ENCODE measurements at regions of chr17 and their contacts with region 1.

Region 1: DNA sequence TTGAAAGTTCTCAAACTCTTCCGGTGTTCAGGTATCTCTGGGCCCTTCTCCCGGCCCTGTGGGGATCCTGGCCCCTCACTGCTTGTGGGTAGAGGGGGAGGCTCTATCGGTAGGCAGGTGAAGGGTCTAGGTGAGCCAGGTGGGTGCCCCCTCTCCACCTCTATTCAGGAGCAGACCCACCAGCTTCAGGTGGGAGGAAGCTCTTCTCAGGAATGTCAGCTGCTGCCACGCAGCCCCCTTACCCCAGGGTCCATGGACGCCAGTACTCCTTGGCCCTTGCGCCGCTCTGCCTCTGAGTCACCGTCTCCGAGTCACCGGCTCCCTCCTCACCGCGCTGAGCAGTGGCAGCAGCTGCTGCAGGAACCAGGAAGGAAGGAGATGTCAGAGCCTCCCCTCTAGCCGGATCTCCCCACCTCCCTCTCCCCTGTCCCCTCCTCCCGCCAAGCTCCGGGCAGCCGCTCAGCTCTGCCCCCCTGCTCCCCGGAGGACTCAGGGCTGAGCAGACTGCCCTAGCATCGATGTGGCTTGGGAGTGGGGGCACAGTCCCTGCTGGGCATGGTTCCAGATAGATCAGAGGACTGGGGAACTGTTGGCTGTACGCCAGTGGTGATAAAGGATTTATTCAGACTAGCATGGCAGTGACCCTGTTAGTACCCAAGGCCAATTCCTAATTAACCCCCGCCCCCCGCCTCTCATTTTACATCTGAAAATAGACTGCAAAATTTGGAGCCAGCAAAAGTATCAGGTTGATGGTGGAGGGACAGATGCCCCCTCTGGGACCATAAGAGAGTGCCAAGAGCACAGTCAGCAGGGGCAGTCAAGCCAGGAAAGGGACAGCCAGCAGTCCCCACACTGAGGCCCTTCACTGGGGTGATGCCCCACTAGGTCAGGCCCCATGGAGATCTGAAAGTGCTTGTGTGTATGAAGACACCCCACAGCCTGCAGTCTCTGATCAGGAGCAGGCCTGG is at the start of gene OSBPL7:
- DNase-seq: peak; percentile 91
- ATAC-seq: peak; percentile 97
- H3K4me3 Mint-ChIP-seq: peak within 1 kb of the TSS; percentile 96
- H3K27ac Mint-ChIP-seq: peak within 1 kb of the TSS; percentile 83
- H3K4me1 Mint-ChIP-seq: peaks cover 27% of the 10 kb centered on the region
- H3K27me3 Mint-ChIP-seq: no peaks in the 10 kb centered on the region
- total RNA-seq, gene OSBPL7: 30.3 to 47.8 TPM

Region 2: GRCh38 chr17:47889734-47890529 is 68.2 kb after region 1 on chr17:
- CTCF ChIA-PET with region 1: interaction called, 10 read pairs
- DNase-seq: peak; percentile 93
- ATAC-seq: peak; percentile 99
- H3K4me3 Mint-ChIP-seq: no peak overlapping the region
- H3K27ac Mint-ChIP-seq: no peak overlapping the region
- H3K4me1 Mint-ChIP-seq: peaks cover 22% of the 10 kb centered on the region
- H3K27me3 Mint-ChIP-seq: no peaks in the 10 kb centered on the region

Region 3: DNA sequence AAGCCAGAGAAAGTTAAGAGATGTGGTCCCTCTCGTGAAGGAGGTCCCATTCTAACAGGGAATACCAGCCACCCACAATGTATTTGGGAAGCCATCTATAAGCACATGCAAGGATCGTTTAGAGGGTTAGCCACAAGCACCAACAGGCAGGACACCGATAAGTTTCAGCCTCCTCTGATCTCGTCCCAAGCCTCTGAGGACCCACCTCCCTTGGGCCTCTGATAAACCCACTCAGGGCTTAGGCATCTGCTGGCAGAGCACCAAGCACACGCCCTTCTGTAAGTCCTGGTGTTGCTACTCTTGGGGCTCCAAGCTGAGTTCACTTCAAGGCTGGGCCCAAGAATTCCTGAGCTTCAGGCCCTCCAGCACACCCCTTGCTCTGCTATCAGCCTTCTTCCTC is 114.3 kb after region 1 on chr17:
- CTCF ChIA-PET with region 1: no interaction called
- DNase-seq: no peak
- ATAC-seq: no peak
- H3K4me3 Mint-ChIP-seq: no peak overlapping the region
- H3K27ac Mint-ChIP-seq: no peak overlapping the region
- H3K4me1 Mint-ChIP-seq: peaks cover 19% of the 10 kb centered on the region
- H3K27me3 Mint-ChIP-seq: no peaks in the 10 kb centered on the region